Transverse colon (tissue), 4 donors: ENCODE measurements at regions of chr6 and their contacts with region 1.

Region 1: DNA sequence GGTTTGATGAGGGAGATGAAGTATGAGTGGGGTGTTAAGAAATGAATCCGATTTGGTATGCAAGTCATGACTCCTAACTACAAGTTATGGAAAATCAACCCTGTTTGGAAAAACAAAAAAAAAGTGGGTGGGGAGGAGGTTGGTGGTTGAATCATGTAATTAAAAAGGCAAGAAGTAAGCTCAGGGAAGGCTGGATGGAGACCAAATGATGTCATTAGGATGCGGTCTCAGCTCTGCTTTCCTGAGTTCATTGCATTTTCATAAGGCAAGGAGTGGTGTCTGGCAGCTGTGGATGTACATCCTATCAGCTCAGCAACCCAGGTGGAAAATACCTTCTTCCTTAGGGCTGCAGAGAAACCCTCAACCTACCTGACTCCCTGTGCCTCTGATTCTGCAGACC is 60.4 kb upstream of the AKAP12 start:
- DNase-seq: no peak
- H3K4me3 ChIP-seq: no peak overlapping the region
- H3K27ac ChIP-seq: no peak overlapping the region
- H3K4me1 ChIP-seq: no peaks in the 10 kb centered on the region
- H3K27me3 ChIP-seq: no peaks in the 10 kb centered on the region
- CTCF ChIP-seq: no peak
- EP300 ChIP-seq: no peak
- POLR2A ChIP-seq: no peak

Region 2: GRCh38 chr6:151147118-151147832 is 32.0 kb before region 1 on chr6:
- in situ Hi-C with region 1: no loop called
- intact Hi-C with region 1: loop called (anchors 1 kb)
- DNase-seq: no peak
- H3K4me3 ChIP-seq: no peak overlapping the region
- H3K27ac ChIP-seq: no peak overlapping the region
- H3K4me1 ChIP-seq: no peaks in the 10 kb centered on the region
- H3K27me3 ChIP-seq: no peaks in the 10 kb centered on the region
- CTCF ChIP-seq: no peak
- EP300 ChIP-seq: no peak
- POLR2A ChIP-seq: no peak

Region 3: GRCh38 chr6:151349651-151350282 is 170.4 kb after region 1 on chr6:
- in situ Hi-C with region 1: no loop called
- intact Hi-C with region 1: no loop called
- DNase-seq: no peak
- H3K4me3 ChIP-seq: no peak overlapping the region
- H3K27ac ChIP-seq: no peak overlapping the region
- H3K4me1 ChIP-seq: no peaks in the 10 kb centered on the region
- H3K27me3 ChIP-seq: no peaks in the 10 kb centered on the region
- CTCF ChIP-seq: no peak
- EP300 ChIP-seq: no peak
- POLR2A ChIP-seq: no peak